Dorsolateral prefrontal cortex (tissue), 120 donors: ENCODE measurements at regions of chr10 and their contacts with region 1.

Region 1: DNA sequence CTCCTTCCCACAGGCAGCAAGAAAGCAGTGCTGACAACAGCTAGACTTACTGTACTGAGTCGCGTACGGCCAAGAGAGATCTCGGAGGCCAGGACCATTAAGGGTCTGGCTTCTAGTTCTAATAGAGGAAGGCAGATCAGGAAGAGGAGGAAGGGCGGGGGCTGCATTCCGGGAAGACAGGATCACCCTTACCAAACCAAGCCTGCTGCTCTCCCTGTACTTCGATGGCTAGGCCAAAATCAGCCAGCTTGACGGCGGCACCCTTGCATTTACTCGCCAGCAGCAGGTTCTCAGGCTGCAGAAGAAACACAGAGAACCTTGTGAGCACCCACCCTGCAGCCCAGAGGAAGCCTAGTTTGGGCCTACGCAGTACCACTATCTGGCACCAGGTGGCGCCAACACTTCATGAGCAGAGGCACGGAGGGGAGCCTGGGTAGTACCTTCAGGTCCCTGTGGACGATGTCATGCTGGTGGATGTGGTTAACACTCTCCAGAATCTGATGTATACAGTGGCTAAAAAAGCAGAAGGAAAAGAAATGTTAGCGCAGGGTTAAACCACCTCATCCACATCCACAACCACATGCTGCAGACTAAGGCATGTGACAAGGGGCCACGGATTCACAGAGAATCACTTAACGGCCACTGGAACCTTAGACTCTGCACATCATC is 25.4 kb downstream of the CAMK2G start:
- DNase-seq: peak; percentile 76 to 91 (median 86)
- H3K4me3 ChIP-seq: peak overlapping the region in 1 of 59 donors; percentile 3
- H3K27ac ChIP-seq: peak overlapping the region in 50 of 59 donors; percentile 4 to 90 (median 70)
- H3K27me3 ChIP-seq: no peaks in the 10 kb centered on the region
- CTCF ChIP-seq: peak; percentile 94 to 100 (median 100)

Region 2: GRCh38 chr10:73879296-73880173 is 30.6 kb after region 1 on chr10:
- intact Hi-C with region 1: loop called (anchors 2 kb)
- DNase-seq: peak in 8 of 10 donors; percentile 54 to 82 (median 76)
- H3K4me3 ChIP-seq: no peak overlapping the region
- H3K27ac ChIP-seq: peak overlapping the region in 4 of 59 donors; percentile 9 to 25 (median 13)
- H3K27me3 ChIP-seq: no peaks in the 10 kb centered on the region
- CTCF ChIP-seq: peak; percentile 43 to 96 (median 86)

Region 3: DNA sequence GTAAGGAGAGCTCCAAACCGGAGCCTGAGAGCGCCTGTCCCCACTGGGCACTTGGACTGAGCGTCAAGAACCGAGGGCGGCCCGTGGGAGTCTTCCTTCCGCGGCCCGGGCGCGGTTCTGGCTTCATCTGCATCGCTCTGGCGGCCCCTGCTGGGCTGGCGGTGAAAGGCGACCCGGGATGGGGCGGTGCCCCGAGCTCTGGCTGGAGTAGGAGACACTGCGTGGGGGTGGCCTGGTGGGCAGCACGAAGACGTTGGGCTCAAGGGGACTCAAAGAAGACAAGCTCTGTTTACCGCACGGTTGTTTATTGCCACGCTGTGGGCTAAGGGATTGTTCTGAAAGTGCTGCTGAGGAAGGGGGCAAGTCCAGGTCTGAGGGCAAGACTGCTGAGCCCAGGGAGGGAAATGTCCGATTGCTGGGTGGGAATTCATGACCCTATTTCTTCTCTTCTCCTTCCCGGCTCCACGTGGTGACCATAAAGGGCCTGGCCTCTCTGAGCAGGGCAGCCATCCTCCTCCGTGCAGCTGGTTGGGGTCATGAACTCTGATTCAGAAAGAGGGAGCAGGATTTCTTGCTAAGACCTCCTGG is 91.8 kb after region 1 on chr10:
- intact Hi-C with region 1: loop called in 1 of 2 experiments (anchors 2 kb)
- DNase-seq: peak; percentile 34 to 76 (median 54)
- H3K4me3 ChIP-seq: peak overlapping the region in 22 of 59 donors; percentile 3 to 44 (median 26)
- H3K27ac ChIP-seq: peak overlapping the region in 23 of 59 donors; percentile 2 to 71 (median 51)
- H3K27me3 ChIP-seq: peaks cover 0 to 3% (median 0%) of the 10 kb centered on the region in 45 donors
- CTCF ChIP-seq: peak; percentile 15 to 90 (median 73)

Region 4: DNA sequence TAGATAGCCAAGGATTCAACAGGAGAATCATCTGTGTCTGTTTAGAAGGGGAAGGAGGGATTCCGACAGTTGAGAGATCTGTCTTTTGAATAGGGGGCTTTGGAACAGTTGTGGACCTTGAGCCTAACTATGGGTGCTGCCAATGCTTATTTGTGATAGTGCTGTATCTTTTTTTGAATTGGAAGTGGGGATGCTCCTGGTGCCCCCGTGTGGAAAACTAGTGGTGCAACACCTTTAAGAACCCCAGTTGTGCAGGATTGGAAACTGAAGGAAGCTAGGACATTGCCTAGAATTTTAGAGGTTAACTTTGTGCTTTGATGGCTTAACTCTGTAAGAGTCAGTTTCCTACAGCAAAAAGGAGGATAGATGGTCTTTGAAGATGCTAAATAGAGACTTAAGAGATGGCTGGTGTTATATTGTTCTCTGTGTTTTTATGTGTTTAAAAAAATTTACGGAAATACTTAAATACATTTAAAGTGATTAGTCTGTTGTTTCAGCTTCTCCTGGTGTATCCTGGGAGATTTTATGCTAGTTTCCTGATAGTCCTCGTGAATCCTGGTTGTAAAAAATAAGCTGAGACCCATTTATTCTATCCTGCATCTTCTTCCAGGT is 232.3 kb after region 1 on chr10:
- intact Hi-C with region 1: loop called in 1 of 2 experiments (anchors 5 kb)
- DNase-seq: peak in 6 of 10 donors; percentile 17 to 54 (median 46)
- H3K4me3 ChIP-seq: no peak overlapping the region
- H3K27ac ChIP-seq: peak overlapping the region in 12 of 59 donors; percentile 1 to 65 (median 20)
- H3K27me3 ChIP-seq: no peaks in the 10 kb centered on the region
- CTCF ChIP-seq: peak; percentile 37 to 83 (median 72)